Caco-2 (cell line): ENCODE measurements at regions of chr2 and their contacts with region 1.

Region 1: GRCh38 chr2:54899576-54900200 is 150.6 kb downstream of the RTN4 start:
- DNase-seq: peak in 1 of 2 experiments; percentile 50
- H3K4me3 ChIP-seq: no peak overlapping the region
- H3K4me3 Mint-ChIP-seq: no peak overlapping the region
- H3K27ac Mint-ChIP-seq: no peak overlapping the region
- H3K4me1 ChIP-seq: peaks cover 47% of the 10 kb centered on the region
- H3K4me1 Mint-ChIP-seq: peaks cover 22% of the 10 kb centered on the region
- H3K27me3 ChIP-seq: no peaks in the 10 kb centered on the region
- H3K27me3 Mint-ChIP-seq: no peaks in the 10 kb centered on the region
- CTCF ChIP-seq: peak; percentile 65 to 69

Region 2: DNA sequence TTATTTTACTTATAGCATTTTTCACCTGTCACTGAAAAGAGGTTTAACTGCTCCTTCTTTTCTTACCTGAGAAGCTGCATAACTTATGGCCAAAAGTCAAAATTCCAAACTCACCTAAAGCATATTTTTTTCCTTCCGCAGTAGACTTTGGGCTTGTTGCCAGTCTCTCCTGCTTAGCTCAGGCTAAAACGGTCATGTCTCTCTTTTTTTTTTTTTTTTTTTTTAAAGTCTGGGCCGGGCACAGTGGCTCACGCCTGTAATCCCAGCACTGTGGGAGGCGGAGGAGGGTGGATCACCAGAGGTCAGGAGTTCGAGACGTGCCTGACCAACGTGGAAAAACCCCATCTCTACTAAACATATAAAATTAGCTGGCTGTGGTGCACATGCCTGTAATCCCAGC is 37.1 kb after region 1 on chr2:
- CTCF ChIA-PET with region 1: no interaction called
- POLR2A ChIA-PET with region 1: no interaction called
- intact Hi-C with region 1: no loop called
- DNase-seq: no peak
- H3K4me3 ChIP-seq: no peak overlapping the region
- H3K4me3 Mint-ChIP-seq: no peak overlapping the region
- H3K27ac Mint-ChIP-seq: no peak overlapping the region
- H3K4me1 ChIP-seq: no peaks in the 10 kb centered on the region
- H3K4me1 Mint-ChIP-seq: no peaks in the 10 kb centered on the region
- H3K27me3 ChIP-seq: no peaks in the 10 kb centered on the region
- H3K27me3 Mint-ChIP-seq: no peaks in the 10 kb centered on the region
- CTCF ChIP-seq: no peak

Region 3: DNA sequence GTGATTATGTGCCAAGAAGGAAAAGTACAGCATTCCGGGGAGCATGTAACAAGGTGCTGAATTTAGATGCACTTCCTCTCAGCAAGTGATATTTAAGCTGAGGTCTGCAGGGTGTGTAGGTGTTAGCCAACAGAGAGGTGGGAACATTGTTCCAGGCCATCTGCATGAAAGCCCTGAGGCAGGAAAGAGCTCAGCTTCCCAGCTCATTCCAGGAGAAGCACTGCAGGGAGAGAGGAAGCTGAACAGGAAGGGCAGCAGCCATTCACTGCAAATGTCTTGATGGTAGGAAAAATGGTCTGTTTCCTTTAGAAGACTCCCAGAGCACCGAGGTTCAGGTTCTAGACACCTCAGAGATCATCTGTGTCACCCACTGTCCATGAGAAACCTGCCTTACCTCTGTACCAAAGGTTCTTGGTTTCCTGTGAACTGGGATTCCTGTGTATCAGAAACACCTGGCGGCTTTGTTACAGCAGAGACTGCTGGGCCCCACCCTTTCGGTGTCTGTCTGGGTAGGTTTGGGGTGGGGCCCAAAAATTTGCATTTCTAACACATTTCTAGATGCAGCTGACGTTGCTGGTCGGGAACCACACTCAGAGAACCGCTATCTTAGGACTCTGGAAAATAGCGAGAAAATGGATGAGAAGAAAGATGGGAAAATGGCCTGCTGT is 66.6 kb after region 1 on chr2:
- CTCF ChIA-PET with region 1: no interaction called
- POLR2A ChIA-PET with region 1: no interaction called
- intact Hi-C with region 1: loop called (anchors 5 kb)
- DNase-seq: no peak
- H3K4me3 ChIP-seq: no peak overlapping the region
- H3K4me3 Mint-ChIP-seq: no peak overlapping the region
- H3K27ac Mint-ChIP-seq: no peak overlapping the region
- H3K4me1 ChIP-seq: no peaks in the 10 kb centered on the region
- H3K4me1 Mint-ChIP-seq: peaks cover 6% of the 10 kb centered on the region
- H3K27me3 ChIP-seq: no peaks in the 10 kb centered on the region
- H3K27me3 Mint-ChIP-seq: no peaks in the 10 kb centered on the region
- CTCF ChIP-seq: no peak

Region 4: GRCh38 chr2:55014962-55015939 is 115.6 kb after region 1 on chr2:
- CTCF ChIA-PET with region 1: interaction called, 14 read pairs
- POLR2A ChIA-PET with region 1: no interaction called
- intact Hi-C with region 1: loop called (anchors 1 kb)
- DNase-seq: peak; percentile 77 to 81
- H3K4me3 ChIP-seq: no peak overlapping the region
- H3K4me3 Mint-ChIP-seq: peak overlapping the region; percentile 55
- H3K27ac Mint-ChIP-seq: peak overlapping the region; percentile 55
- H3K4me1 ChIP-seq: peaks cover 55% of the 10 kb centered on the region
- H3K4me1 Mint-ChIP-seq: peaks cover 37% of the 10 kb centered on the region
- H3K27me3 ChIP-seq: no peaks in the 10 kb centered on the region
- H3K27me3 Mint-ChIP-seq: no peaks in the 10 kb centered on the region
- CTCF ChIP-seq: peak; percentile 64 to 75

Region 5: DNA sequence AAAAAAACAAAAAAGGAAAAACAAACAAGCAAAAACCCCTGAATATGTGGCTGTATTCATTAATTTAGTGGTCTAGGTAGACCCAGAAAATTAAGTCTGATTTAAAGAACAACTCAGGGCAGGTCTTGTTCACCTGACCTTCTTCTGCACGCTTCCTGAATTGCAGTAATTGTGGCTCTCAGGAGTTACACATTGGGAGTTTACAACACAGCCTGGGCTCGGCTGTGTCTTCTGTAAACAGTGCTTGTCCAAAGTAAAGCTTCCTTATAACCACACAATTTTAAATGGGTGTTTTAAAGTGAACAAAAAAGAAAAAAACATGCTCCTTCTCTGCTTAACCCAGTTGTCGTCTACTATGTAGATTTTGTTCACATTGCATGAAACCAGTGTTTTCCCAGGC is 377.6 kb after region 1 on chr2:
- CTCF ChIA-PET with region 1: no interaction called
- POLR2A ChIA-PET with region 1: no interaction called
- intact Hi-C with region 1: no loop called
- DNase-seq: no peak
- H3K4me3 ChIP-seq: no peak overlapping the region
- H3K4me3 Mint-ChIP-seq: no peak overlapping the region
- H3K27ac Mint-ChIP-seq: no peak overlapping the region
- H3K4me1 ChIP-seq: no peaks in the 10 kb centered on the region
- H3K4me1 Mint-ChIP-seq: no peaks in the 10 kb centered on the region
- H3K27me3 ChIP-seq: no peaks in the 10 kb centered on the region
- H3K27me3 Mint-ChIP-seq: no peaks in the 10 kb centered on the region
- CTCF ChIP-seq: no peak

Region 6: DNA sequence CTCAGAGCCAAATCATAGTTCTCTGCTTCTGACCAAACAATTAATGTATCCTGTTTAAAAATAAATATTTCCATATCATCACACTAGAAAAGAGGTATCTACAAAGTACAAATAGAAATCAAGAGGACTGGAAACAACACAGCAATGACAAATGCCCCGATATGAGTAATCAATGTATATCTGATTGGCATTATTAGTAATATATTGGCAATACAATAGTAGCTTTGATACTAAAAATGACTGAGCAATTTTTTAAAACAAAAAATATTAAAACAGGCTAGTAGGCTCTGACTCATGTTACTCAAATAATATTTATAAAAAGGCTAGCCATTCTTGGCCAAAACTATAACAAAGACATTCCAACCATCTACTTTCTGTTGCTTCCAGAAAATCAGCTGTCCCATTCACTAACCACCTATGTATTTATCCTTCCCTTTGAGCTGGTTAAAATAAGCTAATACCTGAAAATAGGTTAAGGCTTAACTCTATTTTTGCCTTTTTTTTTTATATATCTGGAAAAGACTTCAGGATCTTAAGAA is 704.4 kb after region 1 on chr2:
- CTCF ChIA-PET with region 1: no interaction called
- POLR2A ChIA-PET with region 1: no interaction called
- intact Hi-C with region 1: no loop called
- DNase-seq: no peak
- H3K4me3 ChIP-seq: no peak overlapping the region
- H3K4me3 Mint-ChIP-seq: no peak overlapping the region
- H3K27ac Mint-ChIP-seq: no peak overlapping the region
- H3K4me1 ChIP-seq: no peaks in the 10 kb centered on the region; the same call in 1 of the 2 replicates
- H3K4me1 Mint-ChIP-seq: no peaks in the 10 kb centered on the region
- H3K27me3 ChIP-seq: no peaks in the 10 kb centered on the region
- H3K27me3 Mint-ChIP-seq: no peaks in the 10 kb centered on the region
- CTCF ChIP-seq: no peak